ENCODE measurements at regions of chr12 and their contacts with region 1.

Region 1: DNA sequence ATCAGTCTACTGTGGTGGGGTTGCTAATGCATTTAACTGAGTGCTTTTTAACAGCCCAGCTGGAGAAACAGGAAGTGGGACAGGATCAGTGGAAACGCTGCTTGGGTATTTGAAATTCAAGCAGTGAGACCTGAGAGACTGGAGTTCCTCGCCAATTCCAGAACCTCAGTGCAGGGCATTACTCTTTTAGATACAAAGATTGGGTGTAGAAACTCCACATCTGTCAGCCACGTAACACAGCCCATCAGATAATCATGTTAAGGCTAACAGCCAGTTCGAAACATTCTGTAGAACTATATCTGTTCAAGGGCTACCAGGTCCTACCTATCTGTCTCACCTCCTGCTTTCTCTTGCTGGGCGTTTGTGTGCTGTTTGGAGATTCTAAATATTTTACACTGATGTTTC is 45.5 kb downstream of the RAD52 start:
- DNase-seq: no peak
- H3K4me3 ChIP-seq: no peak overlapping the region
- H3K27ac ChIP-seq: no peak overlapping the region
- H3K4me1 ChIP-seq: no peaks in the 10 kb centered on the region
- H3K27me3 ChIP-seq: no peaks in the 10 kb centered on the region
- CTCF ChIP-seq: no peak

Region 2: GRCh38 chr12:823028-823698 is 80.8 kb before region 1 on chr12:
- CTCF ChIA-PET with region 1: no interaction called
- dilution Hi-C with region 1: no loop called
- in situ Hi-C with region 1: no loop called
- intact Hi-C with region 1: loop called (anchors 5 kb)
- DNase-seq: no peak
- H3K4me3 ChIP-seq: no peak overlapping the region
- H3K27ac ChIP-seq: no peak overlapping the region
- H3K4me1 ChIP-seq: no peaks in the 10 kb centered on the region
- H3K27me3 ChIP-seq: no peaks in the 10 kb centered on the region
- CTCF ChIP-seq: no peak